ENCODE measurements at regions of chr3 and their contacts with region 1.

Region 1: DNA sequence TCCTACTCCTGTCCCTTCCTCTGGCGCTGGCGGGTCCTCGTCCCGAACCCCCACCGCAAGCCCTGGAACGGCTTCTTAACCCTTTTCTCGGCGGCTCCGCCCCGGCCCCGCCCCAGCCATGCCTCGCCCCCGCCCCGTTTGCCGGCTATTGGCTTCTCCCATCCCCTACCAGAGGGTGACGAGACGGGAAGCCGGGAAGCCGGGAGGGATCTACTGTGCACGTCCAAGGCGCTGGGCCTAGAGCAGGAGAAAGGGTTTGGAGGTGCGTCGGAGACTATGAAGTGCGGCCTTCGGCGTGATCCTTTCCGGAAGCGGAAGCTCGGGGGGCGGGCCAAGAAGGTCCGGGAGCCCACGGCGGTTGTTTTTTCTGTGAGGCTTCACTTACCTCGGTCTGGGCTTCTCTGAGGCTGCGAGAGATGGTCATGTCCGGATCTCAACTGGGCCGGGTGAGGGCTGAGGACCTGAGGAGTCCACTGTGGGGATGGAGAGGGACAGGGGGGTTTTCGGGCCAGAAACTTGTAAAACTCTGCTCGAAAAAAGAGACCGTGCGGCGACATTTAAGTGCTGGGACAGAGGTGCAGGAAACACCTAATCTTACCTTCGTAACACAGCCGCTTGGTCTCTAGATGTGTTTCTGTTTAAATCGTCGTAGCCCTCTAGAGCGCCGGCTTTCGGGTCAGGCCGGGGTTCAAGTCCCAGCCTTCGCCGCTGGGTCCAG is 21.4 kb downstream of the ROPN1B start:
- DNase-seq: peak in 8 of 9 donors; percentile 57 to 84 (median 73)
- ATAC-seq: peak; percentile 91
- H3K4me3 ChIP-seq: peak overlapping the region; percentile 80
- H3K4me3 Mint-ChIP-seq: peak overlapping the region; percentile 95 to 100 (median 98)
- H3K27ac ChIP-seq: peak overlapping the region; percentile 82
- H3K27ac Mint-ChIP-seq: peak overlapping the region; percentile 92 to 100 (median 98)
- H3K4me1 ChIP-seq: peaks cover 5 to 7% of the 10 kb centered on the region in 2 donors
- H3K4me1 Mint-ChIP-seq: peaks cover 10 to 41% (median 25%) of the 10 kb centered on the region in 7 donors
- H3K27me3 ChIP-seq: no peaks in the 10 kb centered on the region
- H3K27me3 Mint-ChIP-seq: peaks cover 0 to 23% (median 0%) of the 10 kb centered on the region in 5 donors

Region 2: DNA sequence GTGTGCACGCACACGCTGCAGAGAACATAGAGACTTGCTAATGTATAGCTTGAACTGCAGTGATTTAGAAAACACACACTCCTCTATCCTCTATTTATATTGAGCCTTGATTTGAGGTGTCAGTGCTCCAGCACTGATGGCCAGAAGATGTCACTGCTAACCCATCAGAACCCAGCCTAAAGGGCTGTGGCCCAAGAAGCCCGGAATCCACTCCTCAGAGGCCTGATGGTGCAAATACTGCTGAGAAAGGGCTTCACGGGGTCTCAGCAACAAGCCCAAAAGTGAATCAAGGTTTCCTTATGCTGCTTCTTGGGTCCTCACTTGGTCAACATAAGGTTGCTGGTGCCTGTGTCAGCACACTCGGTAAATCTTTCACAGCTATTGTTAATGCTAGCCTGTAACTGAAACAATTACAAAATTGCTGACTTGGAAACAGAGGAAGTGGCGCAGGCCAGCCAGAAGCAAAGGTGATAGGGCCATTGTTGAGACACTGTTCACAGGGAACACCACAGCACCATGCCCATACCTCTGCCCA is 994.9 kb before region 1 on chr3:
- CTCF ChIA-PET with region 1: no interaction called
- POLR2A ChIA-PET with region 1: no interaction called
- intact Hi-C with region 1: no loop called
- DNase-seq: peak; percentile 28 to 69 (median 47)
- ATAC-seq: peak; percentile 93
- H3K4me3 ChIP-seq: no peak overlapping the region
- H3K4me3 Mint-ChIP-seq: peak overlapping the region in 2 of 10 donors; percentile 7 to 41
- H3K27ac ChIP-seq: no peak overlapping the region
- H3K27ac Mint-ChIP-seq: peak overlapping the region in 7 of 9 donors; percentile 21 to 80 (median 53)
- H3K4me1 ChIP-seq: no peaks in the 10 kb centered on the region
- H3K4me1 Mint-ChIP-seq: peaks cover 0 to 32% (median 19%) of the 10 kb centered on the region in 7 donors
- H3K27me3 ChIP-seq: no peaks in the 10 kb centered on the region
- H3K27me3 Mint-ChIP-seq: no peaks in the 10 kb centered on the region

Region 3: DNA sequence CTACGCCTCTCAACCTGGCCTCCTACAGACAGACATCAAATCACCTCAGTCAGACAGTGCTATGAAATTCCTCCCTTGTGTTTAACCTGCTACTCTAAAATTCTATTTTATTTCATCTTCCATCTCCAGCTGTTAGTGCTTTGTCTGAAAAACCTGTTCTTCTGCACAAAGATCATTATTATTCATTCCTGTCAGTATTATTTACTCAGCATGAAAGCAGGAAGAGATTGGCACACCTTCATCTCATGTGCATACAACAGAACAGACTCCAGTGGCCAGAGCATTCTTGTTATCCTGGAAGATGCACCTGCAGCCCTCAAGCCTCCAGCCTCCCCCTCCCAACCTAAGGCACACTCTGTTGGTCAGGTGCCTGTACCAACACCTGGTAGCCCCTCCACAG is 23.3 kb before region 1 on chr3:
- CTCF ChIA-PET with region 1: no interaction called
- POLR2A ChIA-PET with region 1: no interaction called
- intact Hi-C with region 1: loop called in 1 of 2 experiments (anchors 2 kb)
- DNase-seq: no peak
- ATAC-seq: no peak
- H3K4me3 ChIP-seq: no peak overlapping the region
- H3K4me3 Mint-ChIP-seq: no peak overlapping the region
- H3K27ac ChIP-seq: no peak overlapping the region
- H3K27ac Mint-ChIP-seq: no peak overlapping the region
- H3K4me1 ChIP-seq: peaks cover 2 to 5% of the 10 kb centered on the region in 2 donors
- H3K4me1 Mint-ChIP-seq: peaks cover 0 to 4% (median 4%) of the 10 kb centered on the region in 7 donors
- H3K27me3 ChIP-seq: peaks cover 3 to 6% of the 10 kb centered on the region in 2 donors
- H3K27me3 Mint-ChIP-seq: peaks cover 16 to 24% (median 22%) of the 10 kb centered on the region in 5 donors

Region 4: GRCh38 chr3:126036056-126036549 is 45.7 kb after region 1 on chr3:
- CTCF ChIA-PET with region 1: no interaction called
- POLR2A ChIA-PET with region 1: no interaction called
- intact Hi-C with region 1: no loop called
- DNase-seq: no peak
- ATAC-seq: no peak
- H3K4me3 ChIP-seq: no peak overlapping the region
- H3K4me3 Mint-ChIP-seq: no peak overlapping the region
- H3K27ac ChIP-seq: no peak overlapping the region
- H3K27ac Mint-ChIP-seq: no peak overlapping the region
- H3K4me1 ChIP-seq: no peaks in the 10 kb centered on the region
- H3K4me1 Mint-ChIP-seq: peaks cover 0 to 6% (median 0%) of the 10 kb centered on the region in 7 donors
- H3K27me3 ChIP-seq: no peaks in the 10 kb centered on the region
- H3K27me3 Mint-ChIP-seq: no peaks in the 10 kb centered on the region

Region 5: GRCh38 chr3:126357295-126358037 is 367.1 kb after region 1 on chr3 and contains the start of gene KLF15:
- CTCF ChIA-PET with region 1: no interaction called
- POLR2A ChIA-PET with region 1: no interaction called
- intact Hi-C with region 1: loop called in 1 of 2 experiments (anchors 2 kb)
- DNase-seq: peak; percentile 50 to 84 (median 66)
- ATAC-seq: peak; percentile 95
- H3K4me3 ChIP-seq: peak within 1 kb of the TSS; percentile 67
- H3K4me3 Mint-ChIP-seq: peak within 1 kb of the TSS; percentile 89 to 95 (median 91)
- H3K27ac ChIP-seq: no peak within 1 kb of the TSS
- H3K27ac Mint-ChIP-seq: peak within 1 kb of the TSS in 5 of 9 donors; percentile 45 to 93 (median 72)
- H3K4me1 ChIP-seq: peaks cover 4 to 7% of the 10 kb centered on the region in 2 donors
- H3K4me1 Mint-ChIP-seq: peaks cover 4 to 17% (median 11%) of the 10 kb centered on the region in 7 donors
- H3K27me3 ChIP-seq: peaks cover 9 to 10% of the 10 kb centered on the region in 2 donors
- H3K27me3 Mint-ChIP-seq: peaks cover 45 to 52% (median 46%) of the 10 kb centered on the region in 5 donors
- total RNA-seq, gene KLF15: 0.57 to 0.81 TPM in 2 of 5 experiments, not detected in the others

Measured in naive thymus-derived CD4-positive, alpha-beta T cell (primary cell).